Dendritic cell treated with granulocyte-macrophage colony-stimulating factor and Interleukin-4, amounts not matched to agents 40 ng/mL and 50 ng/mL, for 4 days (primary cell): ENCODE measurements at regions of chr7 and their contacts with region 1.

Region 1: GRCh38 chr7:66557608-66558143 is 71.0 kb upstream of the KCTD7 start:
- H3K4me3 Mint-ChIP-seq: no peak overlapping the region
- H3K27ac Mint-ChIP-seq: no peak overlapping the region
- H3K4me1 Mint-ChIP-seq: no peaks in the 10 kb centered on the region
- H3K27me3 Mint-ChIP-seq: no peaks in the 10 kb centered on the region

Region 2: DNA sequence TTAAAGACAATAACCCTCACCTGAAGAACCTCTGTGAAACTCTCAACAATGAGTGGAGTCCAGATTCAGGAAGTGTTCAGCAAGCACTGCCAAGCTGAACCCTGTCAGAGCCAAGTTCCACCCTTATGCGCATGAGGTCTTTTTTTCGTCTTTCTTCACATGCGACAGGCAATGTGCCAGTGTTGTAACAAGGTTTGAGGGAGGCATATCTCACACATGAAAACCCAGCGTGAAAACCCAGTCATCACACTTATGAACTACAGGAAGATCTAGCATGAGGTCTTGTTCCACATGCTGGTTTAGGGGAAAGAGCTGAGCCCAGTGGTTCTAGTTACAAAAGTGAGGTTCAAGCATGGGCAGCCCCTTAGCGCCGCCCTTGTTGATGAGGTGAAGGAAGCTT is 232.5 kb after region 1 on chr7:
- intact Hi-C with region 1: loop called (anchors 10 kb)
- H3K4me3 Mint-ChIP-seq: no peak overlapping the region
- H3K27ac Mint-ChIP-seq: no peak overlapping the region
- H3K4me1 Mint-ChIP-seq: no peaks in the 10 kb centered on the region
- H3K27me3 Mint-ChIP-seq: no peaks in the 10 kb centered on the region